ENCODE measurements at regions of chr4 and their contacts with region 1.

Region 1: GRCh38 chr4:21765810-21766407 is 182.7 kb downstream of the KCNIP4 start:
- DNase-seq: peak; percentile 47 to 64
- H3K4me3 ChIP-seq: no peak overlapping the region
- H3K27ac ChIP-seq: no peak overlapping the region
- H3K4me1 ChIP-seq: peaks cover 0 to 4% (median 0%) of the 10 kb centered on the region in 4 experiments; a peak in 2 of 7 replicates
- H3K27me3 ChIP-seq: no peaks in the 10 kb centered on the region
- CTCF ChIP-seq: peak in 2 of 3 experiments; percentile 82 to 85; a peak in 3 of 4 replicates
- EP300 ChIP-seq: no peak
- POLR2A ChIP-seq: no peak
- RAD21 ChIP-seq: peak; percentile 83 to 90

Region 2: DNA sequence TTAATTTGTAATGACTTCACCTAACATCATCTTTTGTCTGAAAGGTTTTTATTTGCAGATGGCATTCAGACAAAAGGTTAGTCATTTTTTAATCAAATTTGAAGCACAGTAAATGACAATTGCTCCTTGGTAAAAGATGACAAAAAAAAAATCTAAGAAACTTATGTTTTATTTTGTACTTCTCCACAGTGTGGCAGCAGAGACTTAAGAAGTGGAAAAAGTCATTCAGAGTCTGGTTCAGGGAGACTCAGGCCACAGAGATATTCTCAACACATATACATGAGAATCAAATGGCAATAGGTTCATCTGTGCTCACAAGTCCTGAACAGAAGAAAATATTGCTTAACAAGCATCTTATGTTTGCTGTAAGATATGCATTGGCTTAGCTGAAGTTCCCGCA is 253.6 kb before region 1 on chr4:
- CTCF ChIA-PET with region 1: interaction called, 341 read pairs
- POLR2A ChIA-PET with region 1: no interaction called
- DNase-seq: no peak
- H3K4me3 ChIP-seq: no peak overlapping the region
- H3K27ac ChIP-seq: no peak overlapping the region
- H3K4me1 ChIP-seq: no peaks in the 10 kb centered on the region
- H3K27me3 ChIP-seq: no peaks in the 10 kb centered on the region
- CTCF ChIP-seq: peak in 2 of 3 experiments; percentile 38 to 69; a peak in 3 of 4 replicates
- EP300 ChIP-seq: no peak
- POLR2A ChIP-seq: no peak
- RAD21 ChIP-seq: peak; percentile 91 to 94

Region 3: DNA sequence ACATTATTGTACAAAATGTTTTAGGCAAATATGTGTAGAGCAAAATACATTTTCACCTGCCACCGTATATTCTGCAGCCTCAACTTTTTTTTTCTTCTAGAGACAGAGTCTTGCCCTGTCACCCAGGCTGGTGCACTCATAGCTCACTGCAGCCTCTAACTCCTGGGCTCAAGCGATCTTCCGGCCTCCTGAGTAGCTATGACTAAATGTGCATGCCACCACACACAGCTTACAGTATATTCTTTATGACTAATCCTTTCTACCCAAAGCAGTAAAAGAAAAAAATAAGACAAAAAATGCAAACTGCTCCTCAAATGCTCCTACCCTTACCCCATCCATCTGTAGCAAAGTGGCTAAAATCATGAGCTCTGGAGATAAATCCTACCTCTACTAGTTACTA is 243.6 kb before region 1 on chr4:
- CTCF ChIA-PET with region 1: interaction called, 341 read pairs
- POLR2A ChIA-PET with region 1: no interaction called
- DNase-seq: no peak
- H3K4me3 ChIP-seq: no peak overlapping the region
- H3K27ac ChIP-seq: no peak overlapping the region
- H3K4me1 ChIP-seq: no peaks in the 10 kb centered on the region
- H3K27me3 ChIP-seq: no peaks in the 10 kb centered on the region
- CTCF ChIP-seq: no peak
- EP300 ChIP-seq: no peak
- POLR2A ChIP-seq: no peak
- RAD21 ChIP-seq: no peak

Region 4: DNA sequence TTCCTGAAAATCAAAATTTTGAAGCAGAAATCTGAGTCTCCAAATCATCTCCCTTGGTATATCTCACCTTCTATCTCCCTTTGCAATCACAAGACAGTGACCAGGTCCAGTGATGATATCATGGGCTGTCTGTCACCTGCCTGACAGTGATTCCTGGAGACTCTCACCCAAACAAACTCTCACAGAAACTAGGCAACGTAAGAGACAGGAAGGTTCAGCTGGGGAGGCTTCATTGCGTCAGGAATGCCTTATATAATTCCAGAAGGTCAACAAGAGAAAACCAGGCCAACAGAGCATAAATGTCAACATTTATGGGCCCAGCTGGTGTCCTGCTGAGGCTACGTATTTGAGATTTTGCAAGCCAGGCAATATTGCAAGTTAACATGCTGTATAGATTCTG is 230.0 kb before region 1 on chr4:
- CTCF ChIA-PET with region 1: interaction called, 16 read pairs
- POLR2A ChIA-PET with region 1: no interaction called
- DNase-seq: no peak
- H3K4me3 ChIP-seq: no peak overlapping the region
- H3K27ac ChIP-seq: no peak overlapping the region
- H3K4me1 ChIP-seq: no peaks in the 10 kb centered on the region
- H3K27me3 ChIP-seq: no peaks in the 10 kb centered on the region
- CTCF ChIP-seq: no peak
- EP300 ChIP-seq: no peak
- POLR2A ChIP-seq: no peak
- RAD21 ChIP-seq: no peak

Region 5: GRCh38 chr4:21710179-21710835 is 55.6 kb before region 1 on chr4:
- CTCF ChIA-PET with region 1: no interaction called
- POLR2A ChIA-PET with region 1: no interaction called
- DNase-seq: no peak
- H3K4me3 ChIP-seq: no peak overlapping the region
- H3K27ac ChIP-seq: no peak overlapping the region
- H3K4me1 ChIP-seq: peaks cover 0 to 6% (median 3%) of the 10 kb centered on the region in 4 experiments; a peak in 3 of 7 replicates
- H3K27me3 ChIP-seq: no peaks in the 10 kb centered on the region
- CTCF ChIP-seq: no peak
- EP300 ChIP-seq: no peak
- POLR2A ChIP-seq: no peak
- RAD21 ChIP-seq: no peak

Region 6: GRCh38 chr4:21753084-21753760 is 12.7 kb before region 1 on chr4:
- CTCF ChIA-PET with region 1: interaction called, 22 read pairs
- POLR2A ChIA-PET with region 1: no interaction called
- DNase-seq: no peak
- H3K4me3 ChIP-seq: no peak overlapping the region
- H3K27ac ChIP-seq: no peak overlapping the region
- H3K4me1 ChIP-seq: peaks cover 0 to 4% (median 0%) of the 10 kb centered on the region in 4 experiments; a peak in 2 of 7 replicates
- H3K27me3 ChIP-seq: no peaks in the 10 kb centered on the region
- CTCF ChIP-seq: no peak
- EP300 ChIP-seq: no peak
- POLR2A ChIP-seq: no peak
- RAD21 ChIP-seq: no peak

Measured in H1 (cell line).